Esophagus muscularis mucosa (tissue), 4 donors: ENCODE measurements at regions of chr11 and their contacts with region 1.

Region 1: DNA sequence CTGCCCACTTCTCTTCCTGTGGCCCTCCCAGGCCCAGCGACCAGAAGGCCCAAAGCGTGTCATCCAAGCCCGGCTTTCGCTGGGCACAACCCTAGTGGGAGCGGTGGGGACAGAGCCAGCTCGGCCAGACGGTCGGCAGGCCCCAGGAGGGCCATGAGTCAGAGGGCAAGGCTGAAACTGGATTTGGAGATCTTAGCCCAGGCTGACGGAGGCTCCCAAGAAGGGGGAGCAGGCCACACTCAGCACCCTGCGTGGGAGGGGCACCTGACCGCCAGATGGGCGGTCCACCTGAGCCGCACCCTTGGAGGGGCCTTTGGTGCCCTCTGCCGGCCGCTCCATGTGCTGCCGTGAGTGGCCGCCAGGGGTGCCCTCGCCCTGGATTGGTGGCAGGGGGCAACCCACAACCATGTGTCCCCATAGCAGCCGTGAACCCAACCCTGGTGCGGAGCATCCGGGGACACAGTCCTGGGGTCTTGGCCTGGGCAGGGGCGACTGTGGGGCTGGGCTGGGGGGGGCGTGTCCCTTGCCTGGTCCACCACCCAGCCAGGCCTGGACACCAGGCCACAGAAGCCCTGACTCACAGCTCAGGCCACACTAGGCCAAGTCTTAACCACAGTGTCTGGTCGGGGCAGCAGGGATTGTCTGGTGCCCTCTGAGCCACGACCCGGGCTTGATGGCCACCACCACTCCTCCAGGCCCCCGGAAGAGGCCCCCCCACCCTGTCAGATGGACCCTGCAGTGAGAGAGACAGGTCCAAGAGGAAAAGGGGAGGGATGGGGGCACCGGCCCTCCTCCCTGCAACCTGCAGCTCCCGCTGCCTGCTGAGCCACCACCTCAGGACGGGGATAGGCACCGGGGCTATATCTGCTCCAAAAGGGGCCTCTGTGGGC is 19.2 kb upstream of the TALDO1 start:
- DNase-seq: no peak
- H3K4me3 ChIP-seq: no peak overlapping the region
- H3K27ac ChIP-seq: peak overlapping the region; percentile 7 to 54 (median 26)
- H3K4me1 ChIP-seq: peaks cover 23 to 41% (median 38%) of the 10 kb centered on the region in 4 donors
- H3K27me3 ChIP-seq: peaks cover 7 to 77% (median 26%) of the 10 kb centered on the region in 4 donors
- CTCF ChIP-seq: peak in 2 of 3 experiments; percentile 94 to 95
- EP300 ChIP-seq: no peak
- POLR2A ChIP-seq: no peak

Region 2: DNA sequence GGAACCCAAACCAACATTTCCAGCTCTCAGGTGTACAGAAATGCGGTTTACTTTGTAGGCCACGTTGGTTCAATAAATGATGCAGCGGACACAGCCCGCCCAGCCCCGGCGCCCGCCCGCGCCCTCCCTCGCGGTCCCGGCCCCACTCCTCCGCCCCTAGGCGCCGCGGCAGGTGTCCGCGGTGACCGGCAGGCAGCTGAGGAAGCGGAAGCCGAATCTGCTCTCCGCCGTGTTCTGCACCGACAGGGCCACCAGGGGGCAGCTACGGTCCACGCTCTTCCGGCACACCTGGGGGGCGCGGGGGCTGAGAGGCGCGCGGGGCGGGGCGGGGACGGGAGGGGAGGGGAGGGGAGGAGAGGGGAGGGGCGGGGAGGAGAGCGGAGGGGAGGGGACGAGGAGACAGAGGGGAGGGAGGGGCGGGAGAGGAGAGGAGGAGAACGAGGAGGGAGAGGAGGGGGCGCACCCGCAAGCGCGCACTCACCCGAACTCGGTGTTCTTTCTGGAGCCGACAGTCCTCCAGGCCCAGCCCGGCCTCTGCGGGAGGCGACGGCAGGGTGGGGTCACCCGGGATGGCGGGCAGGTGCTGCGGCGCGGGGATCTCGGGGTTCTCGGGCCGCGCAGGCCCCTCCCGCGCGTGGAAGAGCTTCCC is 173.2 kb before region 1 on chr11:
- intact Hi-C with region 1: loop called (anchors 1 kb)
- DNase-seq: no peak
- H3K4me3 ChIP-seq: peak overlapping the region; percentile 34 to 52 (median 39)
- H3K27ac ChIP-seq: no peak overlapping the region
- H3K4me1 ChIP-seq: peaks cover 18 to 29% (median 26%) of the 10 kb centered on the region in 4 donors
- H3K27me3 ChIP-seq: peaks cover 19 to 99% (median 50%) of the 10 kb centered on the region in 4 donors
- CTCF ChIP-seq: peak; percentile 53 to 69 (median 60)
- EP300 ChIP-seq: no peak
- POLR2A ChIP-seq: no peak

Region 3: DNA sequence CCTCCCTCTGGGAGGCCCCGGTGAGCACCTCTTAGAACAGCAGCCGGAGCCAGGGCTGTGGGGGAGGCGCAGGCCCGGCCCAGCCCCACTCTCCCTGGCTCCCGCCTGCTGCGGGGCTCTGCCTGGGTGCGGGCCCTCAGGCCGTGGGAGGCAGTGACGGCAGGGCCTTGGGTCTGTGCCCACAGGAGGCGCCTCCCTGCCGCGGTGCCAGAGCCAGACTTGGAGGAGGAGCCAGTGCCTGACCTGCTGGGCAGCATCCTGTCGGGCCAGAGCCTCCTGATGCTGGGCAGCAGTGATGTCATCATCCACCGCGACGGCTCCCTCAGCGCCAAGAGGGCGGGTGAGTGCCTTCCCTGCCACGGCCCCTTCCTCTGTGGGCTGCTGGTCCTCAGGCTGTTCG is 121.8 kb before region 1 on chr11:
- intact Hi-C with region 1: no loop called
- DNase-seq: no peak
- H3K4me3 ChIP-seq: no peak overlapping the region
- H3K27ac ChIP-seq: peak overlapping the region; percentile 55 to 79 (median 70)
- H3K4me1 ChIP-seq: peaks cover 4 to 14% (median 10%) of the 10 kb centered on the region in 4 donors
- H3K27me3 ChIP-seq: no peaks in the 10 kb centered on the region
- CTCF ChIP-seq: no peak
- EP300 ChIP-seq: no peak
- POLR2A ChIP-seq: no peak

Region 4: GRCh38 chr11:662689-663274 is 65.3 kb before region 1 on chr11:
- intact Hi-C with region 1: loop called (anchors 2 kb)
- DNase-seq: no peak
- H3K4me3 ChIP-seq: no peak overlapping the region
- H3K27ac ChIP-seq: no peak overlapping the region
- H3K4me1 ChIP-seq: peaks cover 0 to 21% (median 14%) of the 10 kb centered on the region in 4 donors
- H3K27me3 ChIP-seq: no peaks in the 10 kb centered on the region
- CTCF ChIP-seq: peak; percentile 64 to 79 (median 77)
- EP300 ChIP-seq: no peak
- POLR2A ChIP-seq: no peak

Region 5: DNA sequence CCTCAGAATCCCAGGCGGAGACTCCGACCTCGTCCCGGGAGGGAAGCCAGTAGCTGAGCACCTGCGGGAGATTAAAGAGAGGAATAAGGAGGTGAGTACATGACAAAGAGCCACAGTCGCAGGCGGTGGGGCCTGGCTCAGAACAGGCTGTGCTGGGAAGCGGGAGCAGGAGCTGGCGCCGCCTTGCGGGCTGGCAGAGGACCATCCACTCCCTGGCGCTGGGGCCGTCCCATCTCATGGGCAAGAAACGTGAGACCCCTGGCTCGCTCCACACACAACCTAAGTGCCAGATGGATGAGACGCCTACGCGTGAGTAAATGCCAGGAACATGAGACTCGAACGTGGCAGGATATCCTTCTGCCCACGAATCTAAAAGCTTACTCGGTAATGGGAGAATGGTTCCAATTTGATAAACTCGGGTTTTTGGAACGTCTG is 55.5 kb after region 1 on chr11:
- intact Hi-C with region 1: no loop called
- DNase-seq: no peak
- H3K4me3 ChIP-seq: no peak overlapping the region
- H3K27ac ChIP-seq: peak overlapping the region in 3 of 4 donors; percentile 29 to 49 (median 32)
- H3K4me1 ChIP-seq: peaks cover 10 to 21% (median 16%) of the 10 kb centered on the region in 4 donors
- H3K27me3 ChIP-seq: peaks cover 0 to 11% (median under 1%) of the 10 kb centered on the region in 4 donors
- CTCF ChIP-seq: peak; percentile 53 to 83 (median 56)
- EP300 ChIP-seq: no peak
- POLR2A ChIP-seq: no peak